ENCODE measurements at regions of chr16 and their contacts with region 1.

Region 1: DNA sequence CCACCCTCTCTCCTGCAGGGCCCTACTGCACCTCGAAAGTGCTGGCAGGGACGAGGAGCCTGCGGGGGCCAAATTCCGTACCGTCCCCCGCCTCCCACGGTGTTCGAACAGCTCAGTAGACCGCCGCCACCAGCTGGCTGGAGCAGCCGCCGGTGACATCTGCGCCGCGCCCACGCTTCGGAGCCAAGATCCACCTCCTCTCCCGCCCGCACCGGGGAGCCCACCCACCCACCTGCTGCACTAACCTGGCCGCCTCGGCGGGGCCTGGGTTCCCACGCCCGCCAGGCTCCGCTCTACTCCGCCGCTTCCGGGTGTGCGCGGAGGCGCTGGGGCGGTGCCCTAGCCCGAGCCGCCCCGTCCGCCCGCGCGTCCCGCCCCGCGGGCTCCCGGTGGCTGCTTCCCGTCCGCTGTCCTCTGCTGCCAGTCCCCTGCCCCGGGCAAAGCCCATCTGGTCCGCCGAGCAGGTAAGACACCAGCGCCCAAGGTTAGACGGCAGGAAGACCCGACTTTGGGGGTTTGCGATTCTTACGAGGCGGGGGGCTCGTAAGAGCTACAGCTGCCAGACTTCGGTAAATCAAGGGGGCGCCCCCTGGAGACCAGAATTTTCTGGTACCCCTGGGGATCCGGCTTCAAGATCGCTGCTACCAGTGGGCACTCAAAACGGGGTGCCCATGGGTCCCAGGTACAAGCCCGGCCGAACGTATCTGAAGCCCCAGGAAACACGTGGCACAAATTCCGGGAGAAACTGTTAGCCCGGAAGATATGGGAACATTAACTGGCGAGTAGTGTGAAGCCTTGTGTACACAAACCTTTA is at the starts of genes FBXL8 and TRADD:
- DNase-seq: peak; percentile 81
- H3K4me3 Mint-ChIP-seq: peak within 1 kb of the TSS; percentile 93
- H3K27ac Mint-ChIP-seq: peak within 1 kb of the TSS; percentile 100
- H3K4me1 Mint-ChIP-seq: peaks cover 62% of the 10 kb centered on the region
- H3K27me3 Mint-ChIP-seq: peaks cover 14% of the 10 kb centered on the region
- total RNA-seq, gene FBXL8: 35.7 to 46.6 TPM
- total RNA-seq, gene TRADD: 47.2 to 57.5 TPM

Region 2: DNA sequence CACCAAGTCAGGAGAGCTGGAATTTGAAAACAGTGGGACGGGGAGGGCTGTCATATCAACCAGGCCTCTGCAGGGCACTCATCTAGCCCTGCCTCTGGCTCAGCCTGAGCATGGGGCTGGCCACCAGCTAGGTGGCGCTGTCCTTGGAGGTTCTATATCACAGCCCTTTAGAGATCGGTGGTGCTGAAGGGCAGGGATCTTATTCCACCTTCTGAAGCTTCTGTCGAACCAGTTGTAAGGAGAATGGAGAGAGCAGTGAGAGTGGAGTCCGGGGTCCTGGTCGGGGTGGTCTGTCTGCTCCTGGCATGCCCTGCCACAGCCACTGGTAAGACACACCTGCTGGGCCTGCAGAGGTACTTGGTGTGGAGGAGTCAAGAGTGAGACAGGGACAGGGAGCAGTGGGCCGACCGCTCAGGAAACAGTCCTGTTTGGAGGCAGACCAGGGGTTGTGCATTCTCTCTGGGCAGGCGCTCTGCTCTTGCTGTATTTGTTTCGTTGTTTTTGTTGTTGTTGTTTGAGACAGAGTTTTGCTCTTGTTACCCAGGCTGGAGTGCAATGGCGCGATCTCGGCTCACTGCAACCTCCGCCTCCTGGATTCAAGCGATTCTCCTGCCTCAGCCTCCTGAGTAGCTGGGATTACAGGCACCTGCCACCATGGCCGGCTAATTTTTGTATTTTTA is 198.6 kb before region 1 on chr16 and contains the start of gene CES3:
- CTCF ChIA-PET with region 1: interaction called, 19 read pairs
- POLR2A ChIA-PET with region 1: interaction called, 11 read pairs
- DNase-seq: peak; percentile 75
- H3K4me3 Mint-ChIP-seq: peak within 1 kb of the TSS; percentile 63
- H3K27ac Mint-ChIP-seq: peak within 1 kb of the TSS; percentile 91
- H3K4me1 Mint-ChIP-seq: peaks cover 44% of the 10 kb centered on the region
- H3K27me3 Mint-ChIP-seq: no peaks in the 10 kb centered on the region
- total RNA-seq, gene CES3: 5.9 to 6.4 TPM

Region 3: DNA sequence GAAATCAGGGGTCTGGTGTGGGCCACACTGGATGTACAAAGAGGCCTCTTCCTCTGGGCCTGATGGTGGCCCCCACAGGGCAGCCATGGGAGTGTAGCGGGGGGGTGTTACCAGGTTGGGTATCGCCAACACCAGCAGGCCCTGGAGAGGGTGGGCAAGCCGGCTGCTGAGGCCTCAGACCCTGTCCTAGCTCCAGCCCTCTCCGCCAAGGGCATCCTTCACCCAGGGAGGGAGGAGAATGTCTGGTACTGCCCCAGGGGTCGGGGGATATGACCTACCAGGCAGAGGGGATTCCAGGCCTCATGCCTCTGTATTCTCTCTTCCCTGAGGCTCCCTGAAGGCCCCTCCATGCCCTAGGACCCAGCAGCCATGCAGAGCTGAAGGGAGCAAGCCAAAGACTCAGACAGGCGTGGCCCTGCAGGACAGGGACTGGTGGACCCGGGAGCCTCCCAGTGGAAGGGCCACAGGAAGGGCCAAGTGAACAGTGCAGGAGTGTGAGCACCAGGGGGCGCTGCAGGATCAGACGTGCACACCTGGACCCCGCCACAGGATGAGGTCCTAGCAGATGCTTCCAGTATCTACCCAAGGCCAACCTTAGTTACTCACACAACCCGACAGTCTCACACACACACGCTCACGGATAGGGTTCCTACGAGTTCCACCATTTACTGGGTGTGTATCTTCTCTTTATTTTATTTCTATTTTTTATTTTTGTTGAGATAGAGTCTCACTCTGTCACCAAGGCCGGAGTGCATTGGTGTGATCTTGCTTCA is 182.3 kb before region 1 on chr16:
- CTCF ChIA-PET with region 1: interaction called, 21 read pairs
- POLR2A ChIA-PET with region 1: no interaction called
- DNase-seq: peak; percentile 91
- H3K4me3 Mint-ChIP-seq: no peak overlapping the region
- H3K27ac Mint-ChIP-seq: peak overlapping the region; percentile 62
- H3K4me1 Mint-ChIP-seq: peaks cover 67% of the 10 kb centered on the region
- H3K27me3 Mint-ChIP-seq: no peaks in the 10 kb centered on the region

Region 4: DNA sequence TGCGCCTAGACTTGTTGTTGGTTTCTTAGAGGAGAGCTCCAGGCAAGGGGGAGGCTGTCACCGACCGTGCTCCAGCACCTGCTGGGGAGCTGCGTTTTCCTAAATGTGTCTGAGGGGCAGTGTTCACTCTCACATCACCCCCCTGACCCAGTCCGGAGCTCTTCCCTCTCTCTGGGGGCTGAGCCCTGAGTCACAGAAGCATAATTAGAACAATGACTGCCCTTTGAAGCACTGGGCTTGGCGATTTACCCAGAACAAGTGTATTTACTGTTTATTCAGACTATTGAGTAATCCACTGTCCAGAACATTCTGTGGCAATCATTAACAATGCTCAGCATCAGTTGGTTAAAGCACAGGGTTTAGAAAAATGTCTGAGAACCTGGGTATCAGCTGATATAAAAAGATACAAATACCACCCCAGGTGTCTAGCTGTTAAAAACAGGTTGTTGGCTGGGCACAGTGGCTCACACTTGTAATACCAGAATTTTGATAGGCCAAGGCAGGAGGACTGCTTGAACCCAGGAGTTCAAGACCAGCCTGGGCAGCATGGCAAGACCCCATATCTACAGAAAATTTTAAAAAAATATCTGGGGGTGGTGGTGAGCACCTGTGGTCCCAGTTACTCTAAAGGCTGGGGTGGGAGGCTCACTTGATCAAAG is 163.3 kb before region 1 on chr16:
- CTCF ChIA-PET with region 1: no interaction called
- POLR2A ChIA-PET with region 1: no interaction called
- DNase-seq: no peak
- H3K4me3 Mint-ChIP-seq: no peak overlapping the region
- H3K27ac Mint-ChIP-seq: no peak overlapping the region
- H3K4me1 Mint-ChIP-seq: peaks cover 24% of the 10 kb centered on the region
- H3K27me3 Mint-ChIP-seq: no peaks in the 10 kb centered on the region

Region 5: DNA sequence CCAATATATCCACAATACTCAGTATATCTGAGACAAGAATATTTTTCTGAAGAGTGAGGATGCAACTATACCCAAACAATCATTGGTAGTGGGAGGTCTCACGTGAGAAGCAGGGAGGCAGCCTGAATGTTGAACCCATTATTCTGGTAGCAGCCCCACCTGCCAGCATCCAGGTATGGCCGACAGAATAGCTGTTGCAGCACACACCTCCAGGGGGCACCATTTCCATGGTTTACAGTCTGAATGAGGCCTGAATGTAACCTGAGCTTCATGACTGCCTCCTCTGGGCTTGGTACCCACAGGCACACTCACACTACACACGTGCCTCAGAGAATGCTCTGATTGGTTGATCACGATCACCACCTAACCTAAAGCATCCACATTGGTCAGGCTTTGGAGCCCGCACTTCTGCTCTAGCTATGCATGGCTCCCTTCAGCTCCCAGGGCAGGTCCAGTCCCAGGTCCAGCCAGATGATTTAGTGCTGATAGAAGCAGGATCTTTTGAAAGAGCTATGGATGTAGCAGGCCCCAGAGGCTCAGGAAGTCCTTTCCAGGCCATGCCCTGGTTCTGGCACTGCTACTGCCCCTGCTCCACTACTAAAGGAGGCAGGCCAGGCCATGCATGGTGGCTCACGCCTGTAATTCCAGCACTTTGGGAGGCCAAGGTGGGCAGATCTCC is 141.9 kb before region 1 on chr16:
- CTCF ChIA-PET with region 1: interaction called, 129 read pairs
- POLR2A ChIA-PET with region 1: no interaction called
- DNase-seq: peak; percentile 94
- H3K4me3 Mint-ChIP-seq: no peak overlapping the region
- H3K27ac Mint-ChIP-seq: peak overlapping the region; percentile 46
- H3K4me1 Mint-ChIP-seq: peaks cover 42% of the 10 kb centered on the region
- H3K27me3 Mint-ChIP-seq: no peaks in the 10 kb centered on the region

Region 6: GRCh38 chr16:67137605-67138004 is 22.2 kb before region 1 on chr16:
- CTCF ChIA-PET with region 1: interaction called, 18 read pairs
- POLR2A ChIA-PET with region 1: no interaction called
- DNase-seq: no peak
- H3K4me3 Mint-ChIP-seq: no peak overlapping the region
- H3K27ac Mint-ChIP-seq: no peak overlapping the region
- H3K4me1 Mint-ChIP-seq: no peaks in the 10 kb centered on the region
- H3K27me3 Mint-ChIP-seq: no peaks in the 10 kb centered on the region

Region 7: DNA sequence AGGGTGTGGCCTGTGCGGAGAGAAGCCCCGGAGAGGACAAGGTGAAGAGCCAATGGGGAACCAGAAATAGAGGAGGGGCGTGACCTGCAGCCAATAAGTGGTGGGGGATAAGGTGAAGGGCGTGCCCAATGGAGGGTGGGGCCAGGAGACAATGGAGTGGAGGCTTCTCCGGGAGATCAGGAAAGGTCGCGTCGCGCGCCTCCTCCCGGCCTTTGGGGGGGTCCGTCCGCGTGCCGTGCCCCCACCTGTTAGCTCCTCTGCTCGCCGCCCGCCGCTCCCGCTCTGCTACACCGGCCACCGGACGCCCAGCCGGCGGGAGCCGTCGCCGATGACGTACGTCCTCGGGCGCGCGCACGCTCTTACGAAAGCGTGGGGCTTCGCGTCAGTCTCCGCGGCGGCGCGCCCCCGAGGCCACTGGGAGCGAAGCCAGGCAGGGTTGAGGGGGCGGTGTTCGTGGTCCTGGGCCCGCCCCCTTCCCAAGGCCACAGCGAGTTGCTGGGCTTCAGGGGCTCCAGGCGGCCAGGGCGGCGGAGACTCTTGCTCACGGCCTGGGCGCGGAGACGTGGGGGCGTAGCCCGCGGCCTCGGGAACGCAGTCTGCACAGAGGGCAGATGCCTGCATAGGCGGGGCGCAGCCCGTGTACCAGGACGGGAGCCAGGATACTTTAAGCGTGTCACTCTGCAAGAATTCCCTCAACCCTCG is 24.0 kb after region 1 on chr16 and contains the start of gene MATCAP1:
- CTCF ChIA-PET with region 1: interaction called, 30 read pairs
- POLR2A ChIA-PET with region 1: no interaction called
- DNase-seq: peak; percentile 98
- H3K4me3 Mint-ChIP-seq: peak within 1 kb of the TSS; percentile 79
- H3K27ac Mint-ChIP-seq: no peak within 1 kb of the TSS
- H3K4me1 Mint-ChIP-seq: peaks cover 25% of the 10 kb centered on the region
- H3K27me3 Mint-ChIP-seq: peaks cover 7% of the 10 kb centered on the region
- total RNA-seq, gene MATCAP1: 47.5 to 51.4 TPM

Region 8: GRCh38 chr16:67653128-67653786 is 493.5 kb after region 1 on chr16:
- CTCF ChIA-PET with region 1: no interaction called
- POLR2A ChIA-PET with region 1: no interaction called
- DNase-seq: no peak
- H3K4me3 Mint-ChIP-seq: no peak overlapping the region
- H3K27ac Mint-ChIP-seq: no peak overlapping the region
- H3K4me1 Mint-ChIP-seq: peaks cover 14% of the 10 kb centered on the region
- H3K27me3 Mint-ChIP-seq: no peaks in the 10 kb centered on the region